MCF 10A (cell line): ENCODE measurements at regions of chr21 and their contacts with region 1.

Region 1: DNA sequence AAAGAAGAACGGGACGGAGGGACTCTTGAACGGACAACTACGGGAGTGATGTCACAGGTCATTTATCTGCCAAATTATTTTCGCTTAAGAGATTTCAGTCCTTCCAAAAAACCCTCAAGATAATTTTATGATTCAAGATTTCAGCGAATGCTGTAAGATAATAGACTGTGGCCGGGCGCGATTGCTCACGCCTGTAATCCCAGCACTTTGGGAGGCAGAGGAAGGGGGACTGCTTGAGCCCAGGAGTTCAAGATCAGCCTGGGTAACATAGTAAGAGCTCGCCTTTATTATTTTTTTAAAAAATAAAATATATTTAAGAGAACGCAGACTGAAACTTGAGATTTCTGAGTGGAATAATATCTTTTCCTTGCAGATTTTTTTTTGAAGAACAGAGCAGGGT is 609 bp downstream of the RWDD2B start:
- DNase-seq: no peak
- H3K4me3 Mint-ChIP-seq: peak overlapping the region; percentile 75
- H3K27ac Mint-ChIP-seq: peak overlapping the region; percentile 81
- H3K4me1 Mint-ChIP-seq: peaks cover 11% of the 10 kb centered on the region
- H3K27me3 Mint-ChIP-seq: no peaks in the 10 kb centered on the region
- CTCF ChIP-seq: no peak

Region 2: GRCh38 chr21:28992526-28993292 is 25.8 kb before region 1 on chr21 and contains the start of gene LTN1:
- CTCF ChIA-PET with region 1: no interaction called
- POLR2A ChIA-PET with region 1: interaction called, 61 read pairs
- intact Hi-C with region 1: no loop called
- DNase-seq: peak; percentile 99
- H3K4me3 Mint-ChIP-seq: peak within 1 kb of the TSS; percentile 95
- H3K27ac Mint-ChIP-seq: peak within 1 kb of the TSS; percentile 99
- H3K4me1 Mint-ChIP-seq: peaks cover 22% of the 10 kb centered on the region
- H3K27me3 Mint-ChIP-seq: no peaks in the 10 kb centered on the region
- CTCF ChIP-seq: no peak
- total RNA-seq, gene LTN1: 27.1 and 34.3 TPM in 2 replicates

Region 3: DNA sequence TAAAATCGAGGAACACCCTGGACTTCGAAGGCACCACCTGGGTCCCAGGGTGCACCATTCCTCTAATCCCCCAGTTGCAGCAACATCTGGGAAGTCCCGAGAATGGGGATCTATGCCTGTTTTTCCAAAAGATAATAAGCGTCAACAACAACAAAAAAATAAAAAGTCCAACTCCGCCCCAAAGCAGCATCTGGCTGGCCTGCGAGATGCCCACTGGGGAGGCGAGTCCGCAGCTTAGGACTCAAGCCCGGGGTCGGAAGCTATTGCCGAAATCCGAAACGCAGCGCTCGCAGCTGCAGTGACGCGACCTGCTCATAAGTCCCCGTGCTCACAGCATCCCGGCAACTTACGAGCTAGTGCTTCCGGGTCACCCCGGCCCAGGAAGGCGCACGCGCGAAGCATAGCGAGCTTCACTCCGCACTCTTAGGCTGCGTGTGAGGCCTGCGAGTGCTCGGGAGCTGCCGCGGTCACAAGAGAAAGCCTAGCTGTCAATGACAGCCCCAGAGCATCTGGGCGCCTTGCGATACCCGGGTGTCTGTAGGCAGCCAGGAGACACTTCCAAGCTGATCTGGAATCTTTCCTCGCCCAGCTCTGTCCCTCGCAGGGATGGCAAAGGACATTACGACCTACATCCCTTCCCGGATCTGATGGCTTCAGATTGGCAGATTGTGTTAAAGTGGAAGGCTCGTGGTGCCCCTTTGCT is 15.9 kb before region 1 on chr21:
- CTCF ChIA-PET with region 1: interaction called, 4 read pairs
- POLR2A ChIA-PET with region 1: interaction called, 76 read pairs
- intact Hi-C with region 1: no loop called
- DNase-seq: peak; percentile 94
- H3K4me3 Mint-ChIP-seq: peak overlapping the region; percentile 78
- H3K27ac Mint-ChIP-seq: peak overlapping the region; percentile 91
- H3K4me1 Mint-ChIP-seq: no peaks in the 10 kb centered on the region
- H3K27me3 Mint-ChIP-seq: no peaks in the 10 kb centered on the region
- CTCF ChIP-seq: no peak

Region 4: GRCh38 chr21:29007805-29008204 is 10.7 kb before region 1 on chr21:
- CTCF ChIA-PET with region 1: interaction called, 4 read pairs
- POLR2A ChIA-PET with region 1: interaction called, 76 read pairs
- intact Hi-C with region 1: no loop called
- DNase-seq: no peak
- H3K4me3 Mint-ChIP-seq: no peak overlapping the region
- H3K27ac Mint-ChIP-seq: no peak overlapping the region
- H3K4me1 Mint-ChIP-seq: no peaks in the 10 kb centered on the region
- H3K27me3 Mint-ChIP-seq: no peaks in the 10 kb centered on the region
- CTCF ChIP-seq: no peak

Region 5: GRCh38 chr21:29406385-29406784 is 387.8 kb after region 1 on chr21:
- CTCF ChIA-PET with region 1: no interaction called
- POLR2A ChIA-PET with region 1: no interaction called
- intact Hi-C with region 1: no loop called
- DNase-seq: no peak
- H3K4me3 Mint-ChIP-seq: no peak overlapping the region
- H3K27ac Mint-ChIP-seq: no peak overlapping the region
- H3K4me1 Mint-ChIP-seq: peaks cover 13% of the 10 kb centered on the region
- H3K27me3 Mint-ChIP-seq: no peaks in the 10 kb centered on the region
- CTCF ChIP-seq: no peak